CD8-positive, alpha-beta T cell (primary cell): ENCODE measurements at regions of chr4 and their contacts with region 1.

Region 1: GRCh38 chr4:26860157-26860921 is at the start of gene STIM2:
- DNase-seq: peak; percentile 95 to 100 (median 98)
- ATAC-seq: peak; percentile 62
- H3K4me3 ChIP-seq: peak within 1 kb of the TSS; percentile 70 to 83
- H3K4me3 Mint-ChIP-seq: peak within 1 kb of the TSS; percentile 99
- H3K27ac ChIP-seq: peak within 1 kb of the TSS; percentile 82 to 83
- H3K27ac Mint-ChIP-seq: peak within 1 kb of the TSS; percentile 99
- H3K4me1 ChIP-seq: peaks cover 60% of the 10 kb centered on the region
- H3K4me1 Mint-ChIP-seq: peaks cover 63% of the 10 kb centered on the region
- H3K27me3 ChIP-seq: no peaks in the 10 kb centered on the region
- H3K27me3 Mint-ChIP-seq: no peaks in the 10 kb centered on the region
- CTCF ChIP-seq: no peak
- total RNA-seq, gene STIM2: 61.1 to 67.0 TPM

Region 2: DNA sequence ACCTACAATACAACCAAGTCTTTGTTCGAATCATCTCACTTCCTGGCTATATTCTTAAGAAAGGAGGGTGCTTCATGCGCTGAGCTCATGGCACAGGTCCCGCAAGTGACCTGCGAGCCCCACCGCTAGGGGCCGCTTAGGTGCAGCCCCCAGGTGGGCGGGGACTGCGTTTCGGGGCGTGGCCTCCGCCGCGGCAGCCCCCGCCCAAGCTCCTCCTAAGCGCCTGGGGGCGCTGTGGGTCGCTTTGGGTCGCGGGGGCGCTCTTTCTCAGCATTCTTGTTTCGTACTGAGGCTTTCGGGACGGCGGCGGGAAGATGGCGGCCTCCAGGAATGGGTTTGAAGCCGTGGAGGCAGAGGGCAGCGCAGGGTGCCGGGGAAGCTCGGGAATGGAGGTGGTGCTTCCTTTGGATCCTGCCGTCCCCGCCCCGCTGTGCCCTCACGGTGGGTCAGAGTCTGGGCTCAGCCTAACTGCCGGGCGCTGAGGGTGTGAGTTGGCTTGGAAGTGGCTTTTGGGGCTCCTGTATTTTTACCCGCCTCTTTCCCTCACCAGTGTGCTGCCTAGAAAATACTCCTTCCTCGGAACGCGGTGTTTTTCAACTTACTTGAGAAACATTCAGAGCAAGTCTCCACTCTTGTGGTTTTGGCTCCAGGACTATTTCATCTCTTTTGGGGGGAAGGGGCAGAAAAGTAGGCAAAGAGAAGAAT is 1547.7 kb before region 1 on chr4 and contains the start of gene ZCCHC4:
- CTCF ChIA-PET with region 1: no interaction called
- POLR2A ChIA-PET with region 1: no interaction called
- intact Hi-C with region 1: loop called in 1 of 2 experiments (anchors 10 kb)
- DNase-seq: peak; percentile 80 to 97 (median 89)
- ATAC-seq: peak; percentile 99
- H3K4me3 ChIP-seq: peak within 1 kb of the TSS; percentile 83 to 95
- H3K4me3 Mint-ChIP-seq: peak within 1 kb of the TSS; percentile 99
- H3K27ac ChIP-seq: peak within 1 kb of the TSS; percentile 48 to 73
- H3K27ac Mint-ChIP-seq: peak within 1 kb of the TSS; percentile 96
- H3K4me1 ChIP-seq: peaks cover 9% of the 10 kb centered on the region
- H3K4me1 Mint-ChIP-seq: peaks cover 27% of the 10 kb centered on the region
- H3K27me3 ChIP-seq: no peaks in the 10 kb centered on the region
- H3K27me3 Mint-ChIP-seq: peaks cover 8% of the 10 kb centered on the region
- CTCF ChIP-seq: peak; percentile 99
- total RNA-seq, gene ZCCHC4: 6.5 to 9.9 TPM

Region 3: GRCh38 chr4:25913851-25914669 is 946.3 kb before region 1 on chr4 and contains the start of gene SMIM20:
- CTCF ChIA-PET with region 1: no interaction called
- POLR2A ChIA-PET with region 1: no interaction called
- intact Hi-C with region 1: loop called (anchors 1 to 5 kb)
- DNase-seq: peak; percentile 81 to 95 (median 87)
- ATAC-seq: peak; percentile 94
- H3K4me3 ChIP-seq: peak within 1 kb of the TSS; percentile 72 to 78
- H3K4me3 Mint-ChIP-seq: peak within 1 kb of the TSS; percentile 97
- H3K27ac ChIP-seq: peak within 1 kb of the TSS; percentile 81 to 95
- H3K27ac Mint-ChIP-seq: peak within 1 kb of the TSS; percentile 98
- H3K4me1 ChIP-seq: peaks cover 18% of the 10 kb centered on the region
- H3K4me1 Mint-ChIP-seq: peaks cover 24% of the 10 kb centered on the region
- H3K27me3 ChIP-seq: no peaks in the 10 kb centered on the region
- H3K27me3 Mint-ChIP-seq: no peaks in the 10 kb centered on the region
- CTCF ChIP-seq: no peak
- total RNA-seq, gene SMIM20: 7.5 to 9.8 TPM

Region 4: DNA sequence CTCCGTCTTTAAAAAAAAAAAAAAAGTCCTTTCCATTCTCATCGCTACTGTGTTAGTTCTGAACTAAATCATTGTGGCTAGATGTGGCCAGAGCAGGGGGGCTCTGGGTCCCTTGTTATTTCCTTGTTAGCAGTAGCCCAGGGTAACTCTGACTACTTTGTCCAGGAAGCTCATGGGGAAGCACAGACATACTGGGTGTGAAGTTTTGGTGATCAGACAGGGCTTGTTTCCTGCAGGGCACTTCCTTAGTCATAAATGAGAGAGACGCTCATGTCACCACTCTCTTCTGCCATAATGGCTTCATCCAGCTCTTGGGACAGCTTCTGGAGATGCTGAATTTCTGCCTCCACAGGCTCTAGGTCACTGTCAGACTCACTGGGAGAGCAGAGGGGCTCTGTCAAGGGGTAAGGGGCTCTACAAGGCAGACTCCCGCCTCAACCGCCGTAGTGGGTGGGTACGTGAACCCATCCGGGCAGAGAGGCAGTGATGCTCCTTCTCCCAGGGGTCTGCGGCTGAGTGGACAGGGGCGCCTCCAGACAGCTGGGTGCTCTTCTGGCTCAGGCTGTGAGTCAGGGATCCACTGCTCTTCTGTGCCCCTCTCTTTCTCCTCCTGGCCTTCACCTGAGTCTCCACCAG is 13.2 kb after region 1 on chr4:
- CTCF ChIA-PET with region 1: interaction called, 5 read pairs
- POLR2A ChIA-PET with region 1: interaction called, 14 read pairs
- intact Hi-C with region 1: loop called (anchors 1 kb)
- DNase-seq: peak in 8 of 9 experiments; percentile 46 to 96 (median 62)
- ATAC-seq: peak; percentile 87
- H3K4me3 ChIP-seq: peak overlapping the region in 1 of 2 experiments; percentile 12
- H3K4me3 Mint-ChIP-seq: peak overlapping the region; percentile 67
- H3K27ac ChIP-seq: peak overlapping the region; percentile 55 to 88
- H3K27ac Mint-ChIP-seq: peak overlapping the region; percentile 88
- H3K4me1 ChIP-seq: peaks cover 68% of the 10 kb centered on the region
- H3K4me1 Mint-ChIP-seq: peaks cover 86% of the 10 kb centered on the region
- H3K27me3 ChIP-seq: no peaks in the 10 kb centered on the region
- H3K27me3 Mint-ChIP-seq: no peaks in the 10 kb centered on the region
- CTCF ChIP-seq: no peak

Region 5: GRCh38 chr4:26916195-26916594 is 55.9 kb after region 1 on chr4:
- CTCF ChIA-PET with region 1: interaction called, 5 read pairs
- POLR2A ChIA-PET with region 1: interaction called, 3 read pairs
- intact Hi-C with region 1: loop called in 1 of 2 experiments (anchors 2 kb)
- DNase-seq: peak in 3 of 9 experiments; percentile 18 to 39 (median 19)
- ATAC-seq: no peak
- H3K4me3 ChIP-seq: no peak overlapping the region
- H3K4me3 Mint-ChIP-seq: no peak overlapping the region
- H3K27ac ChIP-seq: peak overlapping the region in 1 of 2 experiments; percentile 1
- H3K27ac Mint-ChIP-seq: peak overlapping the region; percentile 68
- H3K4me1 ChIP-seq: peaks cover 39% of the 10 kb centered on the region
- H3K4me1 Mint-ChIP-seq: peaks cover 66% of the 10 kb centered on the region
- H3K27me3 ChIP-seq: no peaks in the 10 kb centered on the region
- H3K27me3 Mint-ChIP-seq: no peaks in the 10 kb centered on the region
- CTCF ChIP-seq: no peak

Region 6: DNA sequence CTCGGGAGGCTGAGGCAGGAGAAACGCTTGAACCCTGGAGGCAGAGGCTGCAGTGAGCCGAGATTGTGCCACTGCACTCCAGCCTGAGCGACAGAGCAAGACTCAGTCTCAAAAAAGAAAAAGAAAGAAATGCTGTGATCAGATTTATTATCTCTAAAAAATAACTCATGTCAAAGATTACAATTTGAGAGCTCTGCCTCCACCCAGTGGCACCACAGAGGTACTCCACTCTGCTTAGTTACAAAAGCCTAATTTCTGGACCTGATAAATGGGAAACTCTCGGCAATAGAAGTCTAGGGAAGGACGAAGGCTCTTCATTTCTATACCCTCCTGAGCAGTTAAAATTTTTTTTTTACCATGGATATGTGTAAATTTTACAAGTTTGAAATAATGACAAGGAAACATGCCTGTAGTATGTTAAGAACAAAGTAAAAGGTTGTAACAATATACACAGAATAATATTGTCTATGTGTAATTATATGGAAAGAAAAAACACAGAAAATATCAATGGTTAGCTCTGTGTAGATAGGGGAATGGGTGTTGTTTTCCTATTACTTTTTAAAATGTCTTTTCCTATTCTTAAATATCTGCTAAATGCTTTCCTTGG is 150.1 kb after region 1 on chr4:
- CTCF ChIA-PET with region 1: interaction called, 13 read pairs
- POLR2A ChIA-PET with region 1: interaction called, 5 read pairs
- intact Hi-C with region 1: loop called in 1 of 2 experiments (anchors 1 kb)
- DNase-seq: peak; percentile 23 to 76 (median 64)
- ATAC-seq: peak; percentile 90
- H3K4me3 ChIP-seq: no peak overlapping the region
- H3K4me3 Mint-ChIP-seq: no peak overlapping the region
- H3K27ac ChIP-seq: no peak overlapping the region
- H3K27ac Mint-ChIP-seq: peak overlapping the region; percentile 72
- H3K4me1 ChIP-seq: no peaks in the 10 kb centered on the region
- H3K4me1 Mint-ChIP-seq: peaks cover 13% of the 10 kb centered on the region
- H3K27me3 ChIP-seq: no peaks in the 10 kb centered on the region
- H3K27me3 Mint-ChIP-seq: no peaks in the 10 kb centered on the region
- CTCF ChIP-seq: peak; percentile 98